Heart right ventricle (tissue), 16 donors: ENCODE measurements at regions of chr5 and their contacts with region 1.

Region 1: GRCh38 chr5:100903039-100903887 is at the start of gene ST8SIA4:
- DNase-seq: peak; percentile 81 to 89
- ATAC-seq: peak; percentile 81 to 92 (median 90)
- H3K4me3 ChIP-seq: peak within 1 kb of the TSS; percentile 39 to 75 (median 61)
- H3K27ac ChIP-seq: peak within 1 kb of the TSS in 9 of 10 donors; percentile 34 to 96 (median 85)
- H3K4me1 ChIP-seq: peaks cover 0 to 31% (median 15%) of the 10 kb centered on the region in 9 donors
- H3K27me3 ChIP-seq: peaks cover 0 to 13% (median 0%) of the 10 kb centered on the region in 7 donors
- CTCF ChIP-seq: no peak
- total RNA-seq, gene ST8SIA4: 1.6 to 12.9 (median 5.1) TPM

Region 2: GRCh38 chr5:100623719-100624118 is 279.5 kb before region 1 on chr5:
- intact Hi-C with region 1: loop called in 1 of 10 experiments (anchors 10 kb)
- DNase-seq: no peak
- ATAC-seq: peak in 2 of 8 donors; percentile 42 to 75
- H3K4me3 ChIP-seq: no peak overlapping the region
- H3K27ac ChIP-seq: no peak overlapping the region
- H3K4me1 ChIP-seq: no peaks in the 10 kb centered on the region
- H3K27me3 ChIP-seq: no peaks in the 10 kb centered on the region
- CTCF ChIP-seq: peak; percentile 13 to 71 (median 51)

Region 3: GRCh38 chr5:100777680-100778281 is 125.5 kb before region 1 on chr5:
- intact Hi-C with region 1: loop called in 1 of 10 experiments (anchors 5 kb)
- DNase-seq: peak in 1 of 2 donors; percentile 46
- ATAC-seq: peak in 6 of 8 donors; percentile 51 to 70 (median 58)
- H3K4me3 ChIP-seq: no peak overlapping the region
- H3K27ac ChIP-seq: peak overlapping the region in 3 of 10 donors; percentile 32 to 93 (median 34)
- H3K4me1 ChIP-seq: peaks cover 0 to 54% (median 0%) of the 10 kb centered on the region in 9 donors
- H3K27me3 ChIP-seq: no peaks in the 10 kb centered on the region
- CTCF ChIP-seq: no peak

Region 4: DNA sequence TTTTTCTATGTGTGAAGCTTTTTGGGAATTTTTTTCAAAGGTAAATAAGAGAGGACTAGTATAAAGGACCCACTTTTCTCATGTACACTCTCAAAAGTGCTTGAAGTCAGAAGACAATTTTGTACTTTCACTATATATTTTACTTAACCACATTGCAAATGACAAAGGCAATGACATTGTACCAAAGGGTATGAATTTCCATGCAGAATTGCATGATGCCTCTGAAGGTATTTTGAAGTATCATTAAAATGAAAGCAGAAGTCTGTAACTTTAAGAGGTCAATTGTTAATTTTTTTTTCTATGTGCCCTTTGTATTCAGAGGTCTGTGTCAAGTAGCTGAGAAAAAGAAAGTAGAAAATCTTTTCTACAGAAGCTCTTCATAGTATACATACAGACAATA is 84.9 kb before region 1 on chr5:
- intact Hi-C with region 1: loop called in 1 of 10 experiments (anchors 5 kb)
- DNase-seq: no peak
- ATAC-seq: no peak
- H3K4me3 ChIP-seq: peak overlapping the region in 2 of 10 donors; percentile 2 to 18
- H3K27ac ChIP-seq: no peak overlapping the region
- H3K4me1 ChIP-seq: peaks cover 0 to 27% (median 0%) of the 10 kb centered on the region in 9 donors
- H3K27me3 ChIP-seq: no peaks in the 10 kb centered on the region
- CTCF ChIP-seq: no peak

Region 5: GRCh38 chr5:100852988-100853449 is 50.2 kb before region 1 on chr5:
- intact Hi-C with region 1: loop called in 2 of 10 experiments (anchors 5 to 10 kb)
- DNase-seq: no peak
- ATAC-seq: peak in 1 of 8 donors; percentile 8
- H3K4me3 ChIP-seq: no peak overlapping the region
- H3K27ac ChIP-seq: peak overlapping the region in 5 of 10 donors; percentile 9 to 74 (median 59)
- H3K4me1 ChIP-seq: peaks cover 0 to 51% (median 14%) of the 10 kb centered on the region in 9 donors
- H3K27me3 ChIP-seq: no peaks in the 10 kb centered on the region
- CTCF ChIP-seq: no peak

Region 6: GRCh38 chr5:101045689-101046088 is 142.4 kb after region 1 on chr5:
- intact Hi-C with region 1: loop called in 1 of 10 experiments (anchors 10 kb)
- DNase-seq: no peak
- ATAC-seq: no peak
- H3K4me3 ChIP-seq: no peak overlapping the region
- H3K27ac ChIP-seq: no peak overlapping the region
- H3K4me1 ChIP-seq: no peaks in the 10 kb centered on the region
- H3K27me3 ChIP-seq: no peaks in the 10 kb centered on the region
- CTCF ChIP-seq: peak in 7 of 9 donors; percentile 15 to 58 (median 38)